ENCODE measurements at regions of chr17 and their contacts with region 1.

Region 1: DNA sequence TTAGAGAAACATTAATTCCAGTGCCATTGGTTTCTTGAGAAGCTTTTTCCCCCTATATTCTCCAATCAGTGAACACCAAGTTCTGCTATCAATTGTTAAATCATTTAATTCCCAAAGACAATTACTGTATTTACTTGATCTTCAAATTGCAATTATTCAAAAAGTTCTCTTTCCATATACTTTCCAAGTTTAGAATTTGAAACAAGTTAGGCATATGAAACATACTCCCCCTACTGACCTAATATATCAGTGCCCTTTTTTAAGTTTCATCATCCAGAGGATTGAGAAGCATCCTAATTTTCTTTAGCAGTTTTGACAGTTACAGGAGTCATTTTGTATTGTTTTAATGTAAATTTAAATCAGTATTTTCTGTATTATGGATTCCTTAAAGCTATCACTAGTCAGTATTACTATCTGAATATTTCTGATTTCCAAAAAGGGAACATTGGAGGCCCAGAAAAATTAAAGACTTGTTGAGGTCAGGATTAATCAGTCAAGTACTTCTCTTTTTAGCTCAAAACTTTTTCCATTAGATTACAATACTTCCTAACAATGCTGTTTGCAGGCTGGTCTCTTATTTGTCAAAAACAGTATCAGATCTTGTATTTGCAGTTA is 16.3 kb downstream of the MEIOC start:
- H3K4me3 ChIP-seq: no peak overlapping the region
- H3K27ac ChIP-seq: no peak overlapping the region
- H3K4me1 ChIP-seq: no peaks in the 10 kb centered on the region
- CTCF ChIP-seq: no peak

Region 2: DNA sequence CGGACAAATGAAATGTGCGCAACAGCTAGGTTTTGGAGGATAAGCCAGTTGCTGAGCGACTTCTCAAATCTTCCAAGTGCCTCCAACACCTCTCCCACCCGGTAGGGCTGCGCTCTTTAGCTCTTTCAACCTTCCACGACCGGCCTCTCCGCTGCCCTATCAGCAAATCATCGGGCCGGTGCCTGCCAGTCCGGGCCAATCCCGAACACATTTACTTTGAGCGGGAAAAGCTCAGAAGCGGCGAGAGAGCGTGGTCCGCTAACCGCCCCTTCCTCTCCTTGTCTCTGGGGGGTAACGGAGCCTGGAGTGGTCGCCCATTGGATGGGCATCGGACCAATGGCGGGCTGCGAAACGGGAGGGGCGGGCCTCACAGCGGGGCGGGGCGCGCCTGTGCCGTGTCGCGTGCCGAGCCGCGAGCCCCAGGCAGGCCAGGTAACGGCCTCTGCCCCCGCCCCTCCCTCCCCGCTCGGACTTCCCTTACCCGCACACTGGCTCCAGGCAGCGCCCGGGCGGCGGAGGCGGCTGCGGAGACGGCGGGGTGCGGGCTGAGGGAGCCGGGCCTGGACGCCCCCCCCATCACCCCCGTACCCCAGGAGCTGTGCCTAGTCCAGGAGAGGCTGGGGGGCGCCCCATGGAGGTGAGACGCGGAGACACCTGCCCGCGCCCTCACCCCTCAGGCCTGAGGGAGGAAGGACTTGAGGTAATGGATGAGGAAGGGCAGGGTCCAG is 16.4 kb before region 1 on chr17 and contains the start of gene MEIOC:
- CTCF ChIA-PET with region 1: interaction called, 14 read pairs
- POLR2A ChIA-PET with region 1: interaction called, 3 read pairs
- H3K4me3 ChIP-seq: peak within 1 kb of the TSS; percentile 41
- H3K27ac ChIP-seq: peak within 1 kb of the TSS; percentile 69; the same call in 1 of the 2 replicates
- H3K4me1 ChIP-seq: no peaks in the 10 kb centered on the region
- CTCF ChIP-seq: no peak

Region 3: DNA sequence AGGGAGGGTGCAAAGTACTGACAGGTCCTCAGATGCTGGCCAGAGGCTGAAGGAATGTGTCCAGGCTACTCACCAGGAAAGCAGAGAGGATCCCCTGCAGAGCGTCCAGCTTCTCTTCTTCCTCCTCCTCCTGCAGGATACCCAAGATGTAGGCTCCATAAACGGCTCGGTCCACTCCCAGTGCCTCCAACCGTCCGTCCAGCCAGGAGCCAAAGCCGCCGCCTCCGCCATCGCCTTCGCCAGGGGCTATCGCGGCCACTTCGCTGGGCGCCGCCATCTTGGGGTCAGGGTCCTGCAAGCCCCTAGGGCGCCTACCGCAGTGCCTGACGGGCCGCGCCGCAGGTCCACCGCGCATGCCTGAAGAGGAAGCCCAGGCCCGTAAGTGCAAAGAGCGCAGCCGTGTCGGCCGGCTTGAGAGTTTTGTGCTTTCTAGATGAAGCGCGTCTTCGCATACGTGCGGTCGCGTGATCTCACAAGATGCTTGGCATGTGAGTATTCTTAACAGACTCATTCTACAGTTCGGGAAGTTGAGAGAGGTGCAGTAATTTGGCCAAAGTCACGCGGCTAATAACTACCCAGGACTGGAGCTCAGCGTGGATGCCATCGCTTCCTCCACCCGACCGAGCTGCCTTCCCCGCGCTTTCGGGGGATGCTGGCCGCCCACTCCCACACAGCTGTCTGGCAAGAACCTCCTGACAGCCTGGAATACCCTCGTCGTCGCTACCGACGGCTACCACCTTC is 17.1 kb after region 1 on chr17 and contains the start of gene CCDC43:
- CTCF ChIA-PET with region 1: interaction called, 32 read pairs
- POLR2A ChIA-PET with region 1: interaction called, 11 read pairs
- H3K4me3 ChIP-seq: peak within 1 kb of the TSS; percentile 86
- H3K27ac ChIP-seq: peak within 1 kb of the TSS; percentile 72
- H3K4me1 ChIP-seq: peaks cover 2% of the 10 kb centered on the region; the same call in 1 of the 2 replicates
- CTCF ChIP-seq: no peak

Region 4: GRCh38 chr17:44722254-44722653 is 49.7 kb after region 1 on chr17:
- CTCF ChIA-PET with region 1: no interaction called
- POLR2A ChIA-PET with region 1: interaction called, 12 read pairs
- H3K4me3 ChIP-seq: no peak overlapping the region
- H3K27ac ChIP-seq: no peak overlapping the region
- H3K4me1 ChIP-seq: no peaks in the 10 kb centered on the region
- CTCF ChIP-seq: no peak

Measured in HEK293 (cell line).